AG04450 (cell line): ENCODE measurements at regions of chr10 and their contacts with region 1.

Region 1: DNA sequence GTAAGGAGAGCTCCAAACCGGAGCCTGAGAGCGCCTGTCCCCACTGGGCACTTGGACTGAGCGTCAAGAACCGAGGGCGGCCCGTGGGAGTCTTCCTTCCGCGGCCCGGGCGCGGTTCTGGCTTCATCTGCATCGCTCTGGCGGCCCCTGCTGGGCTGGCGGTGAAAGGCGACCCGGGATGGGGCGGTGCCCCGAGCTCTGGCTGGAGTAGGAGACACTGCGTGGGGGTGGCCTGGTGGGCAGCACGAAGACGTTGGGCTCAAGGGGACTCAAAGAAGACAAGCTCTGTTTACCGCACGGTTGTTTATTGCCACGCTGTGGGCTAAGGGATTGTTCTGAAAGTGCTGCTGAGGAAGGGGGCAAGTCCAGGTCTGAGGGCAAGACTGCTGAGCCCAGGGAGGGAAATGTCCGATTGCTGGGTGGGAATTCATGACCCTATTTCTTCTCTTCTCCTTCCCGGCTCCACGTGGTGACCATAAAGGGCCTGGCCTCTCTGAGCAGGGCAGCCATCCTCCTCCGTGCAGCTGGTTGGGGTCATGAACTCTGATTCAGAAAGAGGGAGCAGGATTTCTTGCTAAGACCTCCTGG is 29.8 kb downstream of the PLAU start:
- DNase-seq: no peak
- H3K4me3 ChIP-seq: no peak overlapping the region
- H3K27ac ChIP-seq: peak overlapping the region; percentile 31
- H3K27me3 ChIP-seq: no peaks in the 10 kb centered on the region
- CTCF ChIP-seq: peak; percentile 94

Region 2: GRCh38 chr10:73730153-73730906 is 210.4 kb before region 1 on chr10:
- CTCF ChIA-PET with region 1: no interaction called
- POLR2A ChIA-PET with region 1: no interaction called
- DNase-seq: peak; percentile 33
- H3K4me3 ChIP-seq: peak overlapping the region; percentile 96
- H3K27ac ChIP-seq: peak overlapping the region; percentile 85
- H3K27me3 ChIP-seq: no peaks in the 10 kb centered on the region
- CTCF ChIP-seq: no peak

Region 3: GRCh38 chr10:73848821-73849489 is 91.8 kb before region 1 on chr10:
- CTCF ChIA-PET with region 1: interaction called, 28 read pairs
- POLR2A ChIA-PET with region 1: no interaction called
- DNase-seq: peak; percentile 49
- H3K4me3 ChIP-seq: no peak overlapping the region
- H3K27ac ChIP-seq: no peak overlapping the region
- H3K27me3 ChIP-seq: no peaks in the 10 kb centered on the region
- CTCF ChIP-seq: peak; percentile 99

Region 4: GRCh38 chr10:73879296-73880173 is 61.2 kb before region 1 on chr10:
- CTCF ChIA-PET with region 1: interaction called, 204 read pairs
- POLR2A ChIA-PET with region 1: no interaction called
- DNase-seq: no peak
- H3K4me3 ChIP-seq: no peak overlapping the region
- H3K27ac ChIP-seq: no peak overlapping the region
- H3K27me3 ChIP-seq: no peaks in the 10 kb centered on the region
- CTCF ChIP-seq: peak; percentile 91

Region 5: DNA sequence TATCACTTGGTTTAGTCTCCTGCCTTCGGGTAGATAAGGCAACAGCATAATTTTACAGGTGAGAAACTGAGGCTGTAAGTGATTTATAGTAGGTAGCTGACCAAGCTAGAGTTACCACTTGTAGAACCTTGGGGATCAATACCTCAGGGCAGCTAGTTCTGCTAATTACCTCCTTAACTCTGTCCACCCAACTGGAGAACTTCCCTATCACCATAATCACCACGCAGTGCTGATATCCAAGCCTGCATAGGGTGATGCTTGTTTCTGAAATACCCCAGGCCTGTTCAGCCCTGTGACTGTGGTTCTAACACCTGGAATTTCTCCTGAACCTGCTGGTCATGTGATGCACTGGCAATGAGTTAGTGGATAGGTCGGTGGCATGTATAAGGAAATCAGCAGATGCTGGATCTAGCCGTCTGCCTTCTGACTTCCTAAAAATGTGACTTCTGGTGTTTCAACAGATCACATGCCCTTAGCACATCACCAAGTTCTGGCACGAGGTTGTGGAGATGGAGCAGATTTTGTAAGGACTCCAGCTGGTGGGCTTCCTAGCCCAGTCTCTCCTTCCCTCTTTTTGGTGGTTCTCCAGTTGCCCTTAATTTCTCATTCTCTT is 14.5 kb before region 1 on chr10:
- CTCF ChIA-PET with region 1: interaction called, 28 read pairs
- POLR2A ChIA-PET with region 1: no interaction called
- DNase-seq: no peak
- H3K4me3 ChIP-seq: no peak overlapping the region
- H3K27ac ChIP-seq: no peak overlapping the region
- H3K27me3 ChIP-seq: no peaks in the 10 kb centered on the region
- CTCF ChIP-seq: no peak

Region 6: GRCh38 chr10:73965890-73966768 is 25.4 kb after region 1 on chr10:
- CTCF ChIA-PET with region 1: interaction called, 16 read pairs
- POLR2A ChIA-PET with region 1: interaction called, 5 read pairs
- DNase-seq: peak; percentile 98
- H3K4me3 ChIP-seq: peak overlapping the region; percentile 5
- H3K27ac ChIP-seq: peak overlapping the region; percentile 97
- H3K27me3 ChIP-seq: no peaks in the 10 kb centered on the region
- CTCF ChIP-seq: no peak